ENCODE measurements at regions of chr2 and their contacts with region 1.

Region 1: GRCh38 chr2:28594289-28595108 is 98.6 kb downstream of the PLB1 start:
- DNase-seq: peak; percentile 85 to 93 (median 90)
- ATAC-seq: peak; percentile 78 to 92 (median 86)
- H3K4me3 ChIP-seq: peak overlapping the region in 6 of 12 donors; percentile 19 to 36 (median 27)
- H3K27ac ChIP-seq: peak overlapping the region; percentile 75 to 93 (median 88)
- H3K4me1 ChIP-seq: peaks cover 0 to 42% (median 18%) of the 10 kb centered on the region in 12 donors
- H3K27me3 ChIP-seq: no peaks in the 10 kb centered on the region
- CTCF ChIP-seq: peak; percentile 79 to 92 (median 87)
- POLR2A ChIP-seq: peak in 1 of 2 donors; percentile 33

Region 2: GRCh38 chr2:28621172-28622100 is 26.9 kb after region 1 on chr2:
- intact Hi-C with region 1: loop called in 2 of 10 experiments (anchors 1 to 2 kb)
- DNase-seq: peak; percentile 60 to 76 (median 69)
- ATAC-seq: peak; percentile 80 to 93 (median 84)
- H3K4me3 ChIP-seq: peak overlapping the region in 1 of 12 donors; percentile 12
- H3K27ac ChIP-seq: peak overlapping the region; percentile 49 to 93 (median 72)
- H3K4me1 ChIP-seq: peaks cover 0 to 56% (median 40%) of the 10 kb centered on the region in 12 donors
- H3K27me3 ChIP-seq: no peaks in the 10 kb centered on the region
- CTCF ChIP-seq: peak in 9 of 12 donors; percentile 17 to 43 (median 24)
- POLR2A ChIP-seq: no peak

Region 3: DNA sequence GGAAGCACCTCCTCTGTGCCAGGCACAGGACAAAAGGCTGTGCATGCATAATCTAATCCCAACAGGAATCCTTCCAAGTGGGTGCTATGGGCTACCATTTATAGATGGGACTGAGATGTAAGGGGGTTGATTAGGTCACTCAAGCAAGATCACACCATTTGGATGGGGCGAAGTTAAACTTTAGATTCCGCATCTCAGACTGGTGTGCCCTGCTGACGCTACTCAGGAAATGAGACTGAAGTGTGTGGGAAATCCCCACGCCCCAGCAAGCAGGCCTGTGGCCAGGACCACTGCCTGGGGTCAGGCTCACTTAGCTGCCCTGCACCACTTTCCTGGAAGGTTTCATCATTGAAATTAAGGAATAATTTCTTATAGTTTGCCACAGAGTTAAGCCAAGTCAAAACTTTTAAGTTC is 86.7 kb after region 1 on chr2:
- intact Hi-C with region 1: loop called in 3 of 10 experiments (anchors 5 to 10 kb)
- DNase-seq: peak in 2 of 5 donors; percentile 42 to 46
- ATAC-seq: peak in 1 of 4 donors; percentile 52
- H3K4me3 ChIP-seq: no peak overlapping the region
- H3K27ac ChIP-seq: peak overlapping the region in 10 of 12 donors; percentile 8 to 83 (median 74)
- H3K4me1 ChIP-seq: peaks cover 14 to 74% (median 52%) of the 10 kb centered on the region in 12 donors
- H3K27me3 ChIP-seq: no peaks in the 10 kb centered on the region
- CTCF ChIP-seq: no peak
- POLR2A ChIP-seq: no peak

Region 4: GRCh38 chr2:28810384-28811285 is 216.1 kb after region 1 on chr2 and contains the start of gene SPDYA:
- intact Hi-C with region 1: loop called in 1 of 10 experiments (anchors 5 kb)
- DNase-seq: peak; percentile 65 to 86 (median 77)
- ATAC-seq: peak; percentile 70 to 96 (median 95)
- H3K4me3 ChIP-seq: peak within 1 kb of the TSS; percentile 29 to 66 (median 56)
- H3K27ac ChIP-seq: no peak within 1 kb of the TSS
- H3K4me1 ChIP-seq: peaks cover 0 to 16% (median 8%) of the 10 kb centered on the region in 12 donors
- H3K27me3 ChIP-seq: no peaks in the 10 kb centered on the region
- CTCF ChIP-seq: peak in 1 of 12 donors; percentile 7
- POLR2A ChIP-seq: no peak
- total RNA-seq, gene SPDYA: 0.17 to 0.50 (median 0.41) TPM in 4 of 9 donors, not detected in the others

Measured in heart left ventricle (tissue), 16 donors.